ENCODE measurements at regions of chr9 and their contacts with region 1.

Region 1: DNA sequence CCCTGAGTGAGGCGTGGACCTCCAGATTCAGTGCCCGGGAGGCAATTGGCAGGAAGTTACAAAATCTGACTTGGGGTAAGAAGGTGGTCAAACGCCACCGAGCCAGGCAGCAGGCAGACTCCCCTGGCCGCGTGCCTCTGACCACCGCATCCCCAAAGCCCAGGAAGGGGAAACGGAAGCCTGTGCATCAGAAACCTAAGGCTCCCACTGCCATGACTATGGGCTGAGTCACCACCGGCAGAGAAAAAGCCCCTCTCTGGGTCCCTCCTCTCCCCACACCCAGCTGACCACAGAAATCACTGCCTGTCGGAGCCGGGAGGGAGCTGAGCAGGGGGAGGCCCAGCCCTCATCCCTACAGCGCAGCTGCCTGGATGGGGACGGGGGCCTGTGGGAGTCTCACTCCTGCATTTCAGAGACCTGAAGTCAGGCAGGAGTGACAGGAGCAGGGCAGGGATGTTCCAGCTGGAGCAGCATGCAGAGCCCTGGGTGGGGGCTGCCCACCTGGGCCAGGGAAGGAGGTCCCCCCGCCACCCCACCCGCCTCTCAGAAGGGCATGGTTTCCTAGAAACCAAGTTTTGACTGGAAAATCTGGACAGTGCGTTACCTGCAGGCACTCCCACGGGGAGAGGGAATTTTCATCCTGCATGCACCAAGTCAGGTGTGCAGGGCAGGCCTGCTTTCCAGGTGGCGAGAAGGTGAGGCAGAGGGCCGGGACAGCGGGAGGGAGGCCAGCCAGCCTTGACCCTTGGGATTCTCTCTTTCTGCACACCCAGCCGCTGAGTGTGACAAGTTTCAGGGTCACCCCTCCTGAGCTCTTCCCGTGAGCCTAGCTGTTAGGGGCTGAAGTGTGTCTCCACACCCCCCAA is 68.2 kb downstream of the LRSAM1 start:
- DNase-seq: peak; percentile 98
- ATAC-seq: peak; percentile 85
- H3K4me3 ChIP-seq: no peak overlapping the region
- H3K27ac ChIP-seq: peak overlapping the region; percentile 90
- H3K4me1 ChIP-seq: peaks cover 41% of the 10 kb centered on the region
- H3K27me3 ChIP-seq: no peaks in the 10 kb centered on the region
- CTCF ChIP-seq: no peak
- POLR2A ChIP-seq: no peak
- RAD21 ChIP-seq: no peak

Region 2: DNA sequence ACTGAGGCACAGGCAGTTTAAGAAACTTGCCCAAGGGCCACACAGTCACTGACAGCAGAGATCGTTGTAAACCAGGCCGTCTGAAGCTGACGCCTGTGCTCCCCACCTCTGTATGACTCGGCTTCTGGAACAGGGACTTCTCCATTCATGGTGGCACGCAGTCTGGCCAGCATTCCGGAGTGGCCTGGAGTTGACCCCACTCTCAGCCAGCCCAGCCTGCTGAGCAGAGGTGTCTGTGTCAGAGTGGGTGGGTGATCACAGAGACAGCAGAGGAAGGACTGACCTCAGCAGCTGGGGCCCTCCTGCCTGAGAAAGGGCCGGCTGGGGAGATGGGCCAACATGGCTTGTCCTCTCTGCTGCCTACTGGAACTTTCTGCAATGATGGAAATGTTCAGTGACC is 55.6 kb before region 1 on chr9:
- CTCF ChIA-PET with region 1: no interaction called
- POLR2A ChIA-PET with region 1: no interaction called
- dilution Hi-C with region 1: no loop called
- in situ Hi-C with region 1: no loop called
- intact Hi-C with region 1: no loop called
- DNase-seq: peak; percentile 76
- ATAC-seq: peak; percentile 34; the same call in 1 of the 2 replicates
- H3K4me3 ChIP-seq: no peak overlapping the region
- H3K27ac ChIP-seq: no peak overlapping the region
- H3K4me1 ChIP-seq: peaks cover 6% of the 10 kb centered on the region
- H3K27me3 ChIP-seq: no peaks in the 10 kb centered on the region
- CTCF ChIP-seq: no peak
- POLR2A ChIP-seq: no peak
- RAD21 ChIP-seq: no peak

Region 3: GRCh38 chr9:127561619-127562500 is 42.3 kb after region 1 on chr9:
- CTCF ChIA-PET with region 1: no interaction called
- POLR2A ChIA-PET with region 1: interaction called, 4 read pairs
- dilution Hi-C with region 1: no loop called
- in situ Hi-C with region 1: no loop called
- intact Hi-C with region 1: loop called (anchors 2 kb)
- DNase-seq: peak; percentile 99
- ATAC-seq: peak; percentile 83
- H3K4me3 ChIP-seq: no peak overlapping the region
- H3K27ac ChIP-seq: peak overlapping the region; percentile 89
- H3K4me1 ChIP-seq: peaks cover 64% of the 10 kb centered on the region
- H3K27me3 ChIP-seq: no peaks in the 10 kb centered on the region
- CTCF ChIP-seq: no peak
- POLR2A ChIP-seq: peak; percentile 44; the same call in 1 of the 2 replicates
- RAD21 ChIP-seq: peak; percentile 22

Region 4: DNA sequence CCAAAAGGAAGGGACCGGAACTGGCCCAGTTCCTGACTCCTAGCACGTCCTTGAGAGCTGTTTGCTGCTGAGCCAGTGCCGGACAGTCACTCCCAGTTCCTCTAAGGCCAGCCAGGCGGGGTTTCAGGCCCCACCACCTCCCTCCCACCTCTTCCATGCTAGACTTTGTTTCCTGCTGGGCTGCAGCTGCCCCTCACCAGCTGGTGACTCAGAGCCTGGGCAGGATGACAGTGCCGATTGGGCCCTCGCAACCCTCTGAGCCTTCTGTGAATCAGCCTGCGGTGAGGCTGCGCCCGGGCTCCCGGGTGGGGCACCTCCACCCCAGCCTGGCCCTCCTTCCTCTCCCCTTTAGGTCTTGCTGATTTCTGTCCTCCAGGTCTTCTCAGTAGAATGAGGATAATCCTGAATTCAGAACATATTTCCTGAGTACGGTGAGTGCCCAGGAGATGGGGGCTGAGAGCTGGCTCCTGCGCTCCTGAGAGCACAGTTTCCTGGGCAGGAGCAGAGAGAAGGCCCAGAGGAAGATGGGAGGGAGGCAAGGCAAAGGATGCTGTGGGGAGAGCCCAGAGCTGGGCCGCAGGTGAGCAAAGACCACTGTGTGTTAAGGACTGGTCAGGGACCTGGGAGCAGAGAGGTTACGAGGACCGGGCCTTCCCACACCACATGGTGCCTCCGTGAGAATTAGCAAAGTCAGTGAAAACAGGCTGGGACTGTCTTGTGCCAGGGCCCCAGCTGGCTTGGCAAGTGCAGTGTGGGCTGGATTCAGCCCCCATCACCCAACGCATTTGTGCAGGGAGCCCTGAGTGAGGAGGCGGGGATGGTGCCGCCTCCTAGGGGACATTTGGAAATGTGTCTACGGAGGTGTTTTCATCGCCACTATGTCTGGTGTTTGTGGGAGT is 59.7 kb after region 1 on chr9:
- CTCF ChIA-PET with region 1: interaction called, 3 read pairs
- POLR2A ChIA-PET with region 1: interaction called, 19 read pairs
- dilution Hi-C with region 1: no loop called
- in situ Hi-C with region 1: loop called (anchors 5 kb)
- intact Hi-C with region 1: loop called (anchors 2 kb)
- DNase-seq: peak; percentile 98
- ATAC-seq: peak; percentile 92
- H3K4me3 ChIP-seq: peak overlapping the region; percentile 33
- H3K27ac ChIP-seq: peak overlapping the region; percentile 93
- H3K4me1 ChIP-seq: peaks cover 25% of the 10 kb centered on the region
- H3K27me3 ChIP-seq: no peaks in the 10 kb centered on the region
- CTCF ChIP-seq: peak; percentile 38
- POLR2A ChIP-seq: 0 out of 2 replicates have a peak, but pooled peaks have one; percentile 15
- RAD21 ChIP-seq: peak; percentile 37; the same call in 1 of the 2 replicates